Heart left ventricle (tissue), 16 donors: ENCODE measurements at regions of chr9 and their contacts with region 1.

Region 1: DNA sequence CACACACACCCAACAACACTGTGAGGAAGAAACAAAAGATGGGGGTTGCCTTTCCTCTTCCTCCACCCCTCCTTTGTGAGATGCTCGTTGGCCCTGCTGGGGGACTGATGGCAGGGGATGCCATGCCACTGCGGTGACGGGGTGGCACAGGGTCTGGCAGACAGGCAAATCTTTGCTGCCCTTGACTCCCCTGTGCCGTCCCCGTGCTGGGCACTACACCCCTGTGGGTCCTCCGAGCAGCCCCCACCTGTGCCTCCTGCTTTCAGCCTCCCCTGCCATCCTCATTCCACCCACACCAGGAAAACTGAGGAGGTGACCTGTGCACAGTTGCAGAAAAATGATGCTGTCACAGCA is 40.2 kb upstream of the IER5L start:
- DNase-seq: no peak
- ATAC-seq: peak in 2 of 4 donors; percentile 15 to 25
- H3K4me3 ChIP-seq: no peak overlapping the region
- H3K27ac ChIP-seq: peak overlapping the region in 1 of 12 donors; percentile 54
- H3K4me1 ChIP-seq: peaks cover 0 to 11% (median 2%) of the 10 kb centered on the region in 12 donors
- H3K27me3 ChIP-seq: no peaks in the 10 kb centered on the region
- CTCF ChIP-seq: no peak
- POLR2A ChIP-seq: no peak

Region 2: DNA sequence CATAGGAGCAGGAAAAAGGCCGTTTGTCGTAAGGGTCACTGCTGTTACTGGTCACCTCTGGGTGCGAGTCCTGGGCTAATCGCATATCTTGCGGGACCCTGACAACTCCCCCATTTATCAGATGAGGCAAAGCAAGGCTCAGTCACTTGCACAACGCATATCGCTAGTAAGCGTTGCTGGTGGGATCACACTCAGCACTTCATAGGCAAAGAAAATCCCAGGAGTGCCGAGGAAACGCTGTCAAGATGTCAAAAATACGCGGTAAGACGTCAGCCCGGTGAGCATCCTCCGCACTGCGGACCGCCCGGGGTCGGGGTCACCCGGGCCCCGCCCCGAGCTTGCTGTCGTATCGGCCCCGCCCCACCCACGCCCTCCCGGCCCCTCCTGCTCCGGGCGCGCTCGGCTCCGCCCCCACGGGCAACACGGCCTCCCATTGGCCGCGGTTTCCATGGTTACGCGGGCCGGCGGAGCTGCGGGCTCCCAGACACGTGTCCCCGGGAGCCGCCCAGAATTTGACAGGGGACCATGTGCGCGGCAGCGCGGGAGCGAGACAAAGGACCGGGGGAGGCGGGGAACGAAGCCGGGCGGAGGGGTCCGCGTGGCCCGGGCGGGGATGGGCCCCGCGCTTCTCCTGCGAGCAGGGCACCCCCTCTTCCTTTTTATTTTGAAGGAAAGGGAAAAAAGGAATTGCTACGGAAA is 40.0 kb after region 1 on chr9:
- intact Hi-C with region 1: loop called in 1 of 10 experiments (anchors 5 kb)
- DNase-seq: peak; percentile 93 to 97 (median 95)
- ATAC-seq: peak; percentile 66 to 87 (median 82)
- H3K4me3 ChIP-seq: peak overlapping the region in 9 of 12 donors; percentile 17 to 41 (median 33)
- H3K27ac ChIP-seq: peak overlapping the region in 6 of 12 donors; percentile 4 to 62 (median 20)
- H3K4me1 ChIP-seq: peaks cover 6 to 45% (median 28%) of the 10 kb centered on the region in 12 donors
- H3K27me3 ChIP-seq: peaks cover 0 to 16% (median 0%) of the 10 kb centered on the region in 9 donors
- CTCF ChIP-seq: no peak
- POLR2A ChIP-seq: no peak